Activated B cell treated with CpG ODN at 0.5 μM for 24 hours (primary cell): ENCODE measurements at regions of chr5 and their contacts with region 1.

Region 1: DNA sequence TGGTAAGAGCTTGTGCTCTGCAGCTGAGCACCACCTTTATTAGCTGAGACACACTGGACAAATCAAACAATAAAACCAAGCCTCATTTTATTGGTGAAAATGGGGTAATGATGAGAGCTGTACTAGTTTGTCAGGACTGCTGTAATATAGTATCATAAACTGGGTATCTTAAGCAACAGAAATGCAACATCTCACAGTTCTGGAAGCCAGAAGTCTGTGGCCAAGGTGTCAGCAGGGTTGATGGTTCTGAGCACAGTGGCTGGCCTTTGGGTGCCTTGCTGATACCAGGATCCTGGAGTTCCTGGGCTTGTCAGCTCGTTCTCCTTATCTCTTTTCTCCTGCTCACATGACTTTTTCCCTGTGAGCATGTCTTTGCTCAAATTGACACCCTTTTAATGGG is 513.1 kb downstream of the IRX1 start:
- DNase-seq: no peak
- ATAC-seq: no peak
- H3K4me3 Mint-ChIP-seq: no peak overlapping the region
- H3K27ac Mint-ChIP-seq: no peak overlapping the region
- H3K4me1 Mint-ChIP-seq: no peaks in the 10 kb centered on the region
- H3K27me3 Mint-ChIP-seq: no peaks in the 10 kb centered on the region
- CTCF ChIP-seq: no peak

Region 2: DNA sequence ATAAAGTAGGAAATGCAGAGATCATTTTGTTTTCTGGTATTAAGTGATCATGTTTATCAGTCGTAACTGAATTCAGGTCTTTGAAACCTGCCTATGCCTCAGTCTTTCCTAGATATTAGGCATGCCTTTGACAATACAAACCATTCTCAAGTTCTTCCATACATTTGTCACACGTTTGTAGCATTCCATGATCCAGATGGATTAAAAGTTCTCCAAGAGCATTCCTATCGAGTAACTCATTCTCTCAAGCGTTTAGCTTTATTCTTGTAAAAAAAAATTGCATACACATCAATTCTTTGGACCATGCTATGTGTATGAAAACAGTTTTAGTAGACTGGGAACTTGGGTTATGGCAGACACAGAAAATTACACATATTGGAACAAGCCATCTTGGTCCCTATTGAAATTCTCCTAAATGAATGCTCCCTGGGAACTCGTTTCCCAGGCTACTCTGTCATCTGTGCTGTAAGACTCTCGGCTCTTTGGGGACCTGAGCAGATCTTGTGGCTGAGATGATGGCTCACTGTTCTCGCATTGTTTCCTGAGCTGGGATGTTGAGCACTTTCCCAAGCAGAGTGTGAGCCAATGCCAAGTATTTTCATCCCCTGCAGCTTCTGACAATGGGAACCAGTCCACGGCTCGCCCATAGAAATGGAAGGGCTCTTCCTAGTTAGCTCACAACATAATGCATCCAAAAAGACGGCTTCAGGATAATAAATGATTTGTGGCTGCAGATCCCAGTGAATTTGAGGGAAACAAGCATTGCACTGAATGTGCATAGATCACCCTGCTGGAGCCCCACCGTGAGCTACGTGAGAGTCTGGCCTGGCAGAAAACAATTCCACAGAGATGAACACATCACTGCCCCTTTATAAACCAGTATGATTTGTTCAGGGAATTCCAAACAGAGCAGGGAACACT is 282.9 kb before region 1 on chr5:
- CTCF ChIA-PET with region 1: no interaction called
- POLR2A ChIA-PET with region 1: no interaction called
- intact Hi-C with region 1: no loop called
- DNase-seq: no peak
- ATAC-seq: no peak
- H3K4me3 Mint-ChIP-seq: no peak overlapping the region
- H3K27ac Mint-ChIP-seq: no peak overlapping the region
- H3K4me1 Mint-ChIP-seq: no peaks in the 10 kb centered on the region
- H3K27me3 Mint-ChIP-seq: no peaks in the 10 kb centered on the region
- CTCF ChIP-seq: no peak

Region 3: GRCh38 chr5:4137781-4138180 is 29.1 kb after region 1 on chr5:
- CTCF ChIA-PET with region 1: no interaction called
- POLR2A ChIA-PET with region 1: no interaction called
- intact Hi-C with region 1: loop called (anchors 1 kb)
- DNase-seq: no peak
- ATAC-seq: no peak
- H3K4me3 Mint-ChIP-seq: no peak overlapping the region
- H3K27ac Mint-ChIP-seq: no peak overlapping the region
- H3K4me1 Mint-ChIP-seq: no peaks in the 10 kb centered on the region
- H3K27me3 Mint-ChIP-seq: no peaks in the 10 kb centered on the region
- CTCF ChIP-seq: no peak